ENCODE measurements at regions of chr1 and their contacts with region 1.

Region 1: GRCh38 chr1:58857680-58858673 is 74.1 kb upstream of the JUN start:
- DNase-seq: peak; percentile 46
- H3K4me3 Mint-ChIP-seq: no peak overlapping the region
- H3K27ac Mint-ChIP-seq: peak overlapping the region; percentile 95
- H3K4me1 Mint-ChIP-seq: peaks cover 53% of the 10 kb centered on the region
- H3K27me3 Mint-ChIP-seq: peaks cover 5% of the 10 kb centered on the region

Region 2: DNA sequence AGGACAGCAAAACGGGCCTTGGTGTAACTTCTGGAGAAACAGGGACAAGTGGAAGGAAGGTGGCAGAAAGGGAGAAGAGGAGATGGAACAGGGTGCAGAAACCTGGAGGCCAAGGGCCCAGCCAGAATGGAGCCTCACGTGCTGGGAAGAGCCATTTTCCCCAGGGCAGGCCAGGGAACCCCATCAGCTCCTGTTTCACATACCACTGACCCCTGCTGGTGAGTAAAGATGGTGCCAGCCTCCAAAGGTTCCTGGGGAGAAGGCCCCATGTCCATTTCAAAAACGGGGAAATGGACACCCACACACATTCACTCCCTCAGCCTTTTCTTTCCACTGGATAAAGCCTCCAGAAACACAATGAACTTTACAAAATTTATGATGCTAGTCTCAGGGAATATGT is 16.5 kb before region 1 on chr1:
- CTCF ChIA-PET with region 1: interaction called, 10 read pairs
- DNase-seq: no peak
- H3K4me3 Mint-ChIP-seq: no peak overlapping the region
- H3K27ac Mint-ChIP-seq: peak overlapping the region; percentile 67
- H3K4me1 Mint-ChIP-seq: no peaks in the 10 kb centered on the region
- H3K27me3 Mint-ChIP-seq: peaks cover 3% of the 10 kb centered on the region

Region 3: DNA sequence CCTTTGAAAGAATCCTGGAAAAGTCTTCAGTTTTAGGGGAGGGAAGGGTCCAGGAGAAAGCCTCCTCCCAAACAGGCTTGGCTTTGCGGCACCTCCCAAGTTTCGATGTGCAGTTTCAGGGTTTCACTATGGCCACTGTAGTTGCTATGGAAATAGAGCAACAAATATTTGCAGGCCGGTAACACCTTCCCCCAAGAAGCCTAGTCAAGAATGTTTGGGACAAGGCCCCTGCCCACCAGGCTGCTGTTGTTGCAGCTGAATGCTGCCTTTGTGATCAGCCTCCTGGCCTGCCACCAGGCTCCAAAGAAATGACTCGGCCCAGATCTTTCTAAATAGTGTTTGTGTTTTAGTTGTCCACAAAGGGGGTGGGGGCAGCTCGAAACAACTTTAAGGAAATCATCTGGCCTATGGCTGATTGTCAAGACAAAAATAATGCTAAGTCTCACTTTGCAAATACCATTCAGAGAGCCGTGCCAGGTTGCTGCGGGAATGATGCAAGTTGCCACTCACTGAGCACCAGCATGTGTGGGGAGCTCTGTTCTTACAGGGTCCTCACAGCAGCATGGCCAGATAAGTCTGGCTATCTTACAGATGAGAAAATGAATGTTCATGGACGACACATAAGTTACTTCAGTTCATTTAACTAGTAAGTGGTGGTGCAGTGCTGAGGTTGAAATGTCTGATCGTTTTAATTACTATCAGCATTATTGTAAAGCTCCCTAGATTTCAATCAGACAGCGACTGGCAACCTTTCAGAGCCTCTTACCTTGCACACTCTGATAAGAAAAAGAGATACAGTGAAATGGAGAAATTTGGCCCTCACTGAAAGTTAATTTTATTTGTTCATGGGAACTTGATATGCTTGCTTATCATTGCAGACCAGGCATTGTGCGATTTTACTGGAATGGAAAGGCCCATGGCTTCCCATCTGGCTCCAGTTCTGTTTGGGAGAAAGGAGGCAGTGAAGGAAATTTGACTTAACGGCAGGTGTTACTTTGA is 17.1 kb after region 1 on chr1:
- CTCF ChIA-PET with region 1: no interaction called
- DNase-seq: no peak
- H3K4me3 Mint-ChIP-seq: no peak overlapping the region
- H3K27ac Mint-ChIP-seq: no peak overlapping the region
- H3K4me1 Mint-ChIP-seq: no peaks in the 10 kb centered on the region
- H3K27me3 Mint-ChIP-seq: peaks cover 17% of the 10 kb centered on the region